ENCODE measurements at regions of chr12 and their contacts with region 1.

Region 1: GRCh38 chr12:4276524-4277204 is 3.1 kb downstream of the CCND2 start:
- DNase-seq: peak; percentile 90
- H3K4me3 ChIP-seq: peak overlapping the region in 2 of 4 donors; percentile 71 to 83
- H3K27ac ChIP-seq: peak overlapping the region; percentile 92 to 97 (median 95)
- H3K4me1 ChIP-seq: peaks cover 38 to 77% (median 74%) of the 10 kb centered on the region in 4 donors
- H3K27me3 ChIP-seq: no peaks in the 10 kb centered on the region
- CTCF ChIP-seq: peak; percentile 89 to 98 (median 93)
- EP300 ChIP-seq: no peak
- POLR2A ChIP-seq: no peak

Region 2: DNA sequence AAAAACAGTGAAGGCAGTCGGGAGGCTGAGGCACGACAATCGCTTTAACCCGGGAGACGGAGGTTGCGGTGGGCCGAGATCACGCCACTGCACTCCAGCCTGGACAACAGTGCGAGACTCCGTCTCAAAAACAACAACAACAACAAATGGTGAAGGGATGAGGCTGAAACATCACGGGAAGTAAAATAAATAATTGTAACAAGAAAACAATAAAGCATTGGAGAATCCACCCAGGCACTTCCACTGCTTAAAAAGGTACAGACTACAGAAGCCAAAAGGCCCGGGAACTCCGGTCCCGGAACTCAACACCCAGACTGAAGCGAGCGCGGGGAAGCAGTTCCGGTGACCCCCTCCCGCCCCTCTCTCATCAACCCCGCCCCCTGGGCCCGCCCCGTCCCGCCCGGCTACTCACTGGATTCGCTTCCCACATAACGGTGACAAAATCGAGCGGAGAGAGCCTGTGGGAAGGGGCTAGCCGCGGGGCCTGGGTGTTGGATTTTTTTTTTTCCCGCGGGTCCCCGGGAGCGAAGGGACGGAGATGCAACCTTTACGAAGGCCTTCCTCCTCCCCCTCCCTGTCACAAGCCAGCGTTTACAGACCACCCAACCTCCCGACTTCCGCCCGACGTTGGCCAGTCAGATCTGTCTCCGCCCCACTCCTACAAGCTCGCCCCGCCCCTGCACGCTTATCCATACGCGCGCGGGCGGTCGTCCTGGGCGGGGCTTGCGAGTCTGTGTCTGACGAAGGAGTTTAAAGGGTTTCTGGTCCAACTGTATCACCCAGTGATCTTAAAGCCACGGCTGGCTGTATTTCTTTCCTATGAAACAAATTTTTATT is 403.6 kb before region 1 on chr12 and contains the start of gene PARP11:
- in situ Hi-C with region 1: loop called in 2 of 4 experiments (anchors 10 to 25 kb)
- intact Hi-C with region 1: no loop called
- DNase-seq: peak; percentile 98
- H3K4me3 ChIP-seq: peak within 1 kb of the TSS; percentile 58 to 78 (median 66)
- H3K27ac ChIP-seq: peak within 1 kb of the TSS; percentile 90 to 94 (median 92)
- H3K4me1 ChIP-seq: peaks cover 6 to 42% (median 26%) of the 10 kb centered on the region in 4 donors
- H3K27me3 ChIP-seq: no peaks in the 10 kb centered on the region
- CTCF ChIP-seq: no peak
- EP300 ChIP-seq: no peak
- POLR2A ChIP-seq: peak; percentile 63
- total RNA-seq, gene PARP11: 4.5 to 6.2 (median 5.0) TPM

Region 3: GRCh38 chr12:3998968-3999826 is 277.5 kb before region 1 on chr12:
- in situ Hi-C with region 1: loop called in 3 of 4 experiments (anchors 10 kb)
- intact Hi-C with region 1: loop called (anchors 10 kb)
- DNase-seq: peak; percentile 52
- H3K4me3 ChIP-seq: no peak overlapping the region
- H3K27ac ChIP-seq: peak overlapping the region in 3 of 4 donors; percentile 28 to 41 (median 31)
- H3K4me1 ChIP-seq: no peaks in the 10 kb centered on the region
- H3K27me3 ChIP-seq: no peaks in the 10 kb centered on the region
- CTCF ChIP-seq: no peak
- EP300 ChIP-seq: no peak
- POLR2A ChIP-seq: no peak

Region 4: GRCh38 chr12:4107436-4107878 is 169.2 kb before region 1 on chr12:
- in situ Hi-C with region 1: loop called (anchors 5 to 25 kb)
- intact Hi-C with region 1: no loop called
- DNase-seq: peak; percentile 55
- H3K4me3 ChIP-seq: no peak overlapping the region
- H3K27ac ChIP-seq: no peak overlapping the region
- H3K4me1 ChIP-seq: peaks cover 0 to 6% (median 0%) of the 10 kb centered on the region in 4 donors
- H3K27me3 ChIP-seq: no peaks in the 10 kb centered on the region
- CTCF ChIP-seq: peak; percentile 65 to 74 (median 68)
- EP300 ChIP-seq: no peak
- POLR2A ChIP-seq: no peak

Region 5: GRCh38 chr12:4118017-4118510 is 158.6 kb before region 1 on chr12:
- in situ Hi-C with region 1: loop called (anchors 5 to 25 kb)
- intact Hi-C with region 1: no loop called
- DNase-seq: peak; percentile 80
- H3K4me3 ChIP-seq: no peak overlapping the region
- H3K27ac ChIP-seq: peak overlapping the region; percentile 39 to 75 (median 62)
- H3K4me1 ChIP-seq: peaks cover 23 to 33% (median 27%) of the 10 kb centered on the region in 4 donors
- H3K27me3 ChIP-seq: no peaks in the 10 kb centered on the region
- CTCF ChIP-seq: no peak
- EP300 ChIP-seq: no peak
- POLR2A ChIP-seq: peak; percentile 5

Region 6: GRCh38 chr12:4133029-4133428 is 143.6 kb before region 1 on chr12:
- in situ Hi-C with region 1: no loop called
- intact Hi-C with region 1: no loop called
- DNase-seq: no peak
- H3K4me3 ChIP-seq: no peak overlapping the region
- H3K27ac ChIP-seq: no peak overlapping the region
- H3K4me1 ChIP-seq: no peaks in the 10 kb centered on the region
- H3K27me3 ChIP-seq: no peaks in the 10 kb centered on the region
- CTCF ChIP-seq: no peak
- EP300 ChIP-seq: no peak
- POLR2A ChIP-seq: no peak

Region 7: GRCh38 chr12:4191642-4192041 is 85.0 kb before region 1 on chr12:
- in situ Hi-C with region 1: no loop called
- intact Hi-C with region 1: no loop called
- DNase-seq: no peak
- H3K4me3 ChIP-seq: no peak overlapping the region
- H3K27ac ChIP-seq: no peak overlapping the region
- H3K4me1 ChIP-seq: no peaks in the 10 kb centered on the region
- H3K27me3 ChIP-seq: no peaks in the 10 kb centered on the region
- CTCF ChIP-seq: no peak
- EP300 ChIP-seq: no peak
- POLR2A ChIP-seq: no peak

Region 8: GRCh38 chr12:4293299-4293965 is 16.8 kb after region 1 on chr12:
- in situ Hi-C with region 1: no loop called
- intact Hi-C with region 1: no loop called
- DNase-seq: no peak
- H3K4me3 ChIP-seq: no peak overlapping the region
- H3K27ac ChIP-seq: peak overlapping the region; percentile 28 to 60 (median 46)
- H3K4me1 ChIP-seq: peaks cover 16 to 49% (median 26%) of the 10 kb centered on the region in 4 donors
- H3K27me3 ChIP-seq: no peaks in the 10 kb centered on the region
- CTCF ChIP-seq: no peak
- EP300 ChIP-seq: no peak
- POLR2A ChIP-seq: no peak

Measured in transverse colon (tissue), 4 donors.